Calu3 (cell line): ENCODE measurements at regions of chr2 and their contacts with region 1.

Region 1: DNA sequence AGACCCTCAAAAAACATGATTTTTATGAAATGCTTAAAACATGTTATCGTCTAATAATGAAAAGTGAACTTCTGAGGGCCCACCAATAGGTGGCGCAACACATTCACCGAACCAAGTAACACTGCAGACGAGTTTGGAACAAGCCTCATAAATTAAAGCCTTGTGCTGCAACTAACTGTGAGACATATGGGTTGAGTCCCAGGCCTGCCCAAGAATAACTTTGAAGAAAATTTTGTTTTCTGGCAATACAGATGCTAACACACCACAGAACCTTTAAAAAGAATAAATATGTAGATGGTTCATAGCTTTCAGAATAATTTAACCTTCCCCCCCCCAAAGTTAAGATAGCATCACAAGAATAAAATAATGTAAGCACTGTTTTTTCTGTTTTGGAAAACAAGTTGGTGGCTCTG is 285.8 kb downstream of the RNF144A start:
- DNase-seq: peak; percentile 61
- H3K4me3 Mint-ChIP-seq: no peak overlapping the region
- H3K27ac Mint-ChIP-seq: no peak overlapping the region
- H3K4me1 Mint-ChIP-seq: no peaks in the 10 kb centered on the region
- H3K27me3 Mint-ChIP-seq: peaks cover 10% of the 10 kb centered on the region
- CTCF ChIP-seq: peak; percentile 58

Region 2: GRCh38 chr2:7363906-7364305 is 160.8 kb after region 1 on chr2:
- CTCF ChIA-PET with region 1: no interaction called
- intact Hi-C with region 1: loop called (anchors 2 kb)
- DNase-seq: no peak
- H3K4me3 Mint-ChIP-seq: no peak overlapping the region
- H3K27ac Mint-ChIP-seq: no peak overlapping the region
- H3K4me1 Mint-ChIP-seq: no peaks in the 10 kb centered on the region
- H3K27me3 Mint-ChIP-seq: no peaks in the 10 kb centered on the region
- CTCF ChIP-seq: no peak

Region 3: GRCh38 chr2:7405861-7406715 is 203.0 kb after region 1 on chr2:
- CTCF ChIA-PET with region 1: no interaction called
- intact Hi-C with region 1: loop called (anchors 10 kb)
- DNase-seq: no peak
- H3K4me3 Mint-ChIP-seq: no peak overlapping the region
- H3K27ac Mint-ChIP-seq: no peak overlapping the region
- H3K4me1 Mint-ChIP-seq: no peaks in the 10 kb centered on the region
- H3K27me3 Mint-ChIP-seq: peaks cover 15% of the 10 kb centered on the region
- CTCF ChIP-seq: no peak

Region 4: GRCh38 chr2:8761529-8762164 is 1558.6 kb after region 1 on chr2:
- CTCF ChIA-PET with region 1: no interaction called
- intact Hi-C with region 1: loop called (anchors 10 kb)
- DNase-seq: peak; percentile 2
- H3K4me3 Mint-ChIP-seq: no peak overlapping the region
- H3K27ac Mint-ChIP-seq: no peak overlapping the region
- H3K4me1 Mint-ChIP-seq: no peaks in the 10 kb centered on the region
- H3K27me3 Mint-ChIP-seq: no peaks in the 10 kb centered on the region
- CTCF ChIP-seq: no peak